Activated CD8-positive, alpha-beta T cell treated with anti-CD3 and anti-CD28 coated beads for 36 hours (primary cell): ENCODE measurements at regions of chr19 and their contacts with region 1.

Region 1: GRCh38 chr19:18322759-18323460 is at the start of gene LSM4:
- DNase-seq: peak; percentile 100
- ATAC-seq: peak; percentile 94
- H3K4me3 Mint-ChIP-seq: peak within 1 kb of the TSS; percentile 85
- H3K27ac Mint-ChIP-seq: peak within 1 kb of the TSS; percentile 99
- H3K4me1 Mint-ChIP-seq: peaks cover 50% of the 10 kb centered on the region
- H3K27me3 Mint-ChIP-seq: no peaks in the 10 kb centered on the region
- CTCF ChIP-seq: peak; percentile 45
- total RNA-seq, gene LSM4: 426 to 433 TPM

Region 2: GRCh38 chr19:18274781-18275356 is 48.0 kb before region 1 on chr19:
- CTCF ChIA-PET with region 1: interaction called, 330 read pairs
- POLR2A ChIA-PET with region 1: interaction called, 592 read pairs
- intact Hi-C with region 1: loop called (anchors 1 kb)
- DNase-seq: peak; percentile 32
- ATAC-seq: peak; percentile 6
- H3K4me3 Mint-ChIP-seq: no peak overlapping the region
- H3K27ac Mint-ChIP-seq: peak overlapping the region; percentile 63
- H3K4me1 Mint-ChIP-seq: peaks cover 31% of the 10 kb centered on the region
- H3K27me3 Mint-ChIP-seq: no peaks in the 10 kb centered on the region
- CTCF ChIP-seq: no peak

Region 3: GRCh38 chr19:18291590-18292461 is 31.1 kb before region 1 on chr19:
- CTCF ChIA-PET with region 1: interaction called, 9 read pairs
- POLR2A ChIA-PET with region 1: interaction called, 20 read pairs
- intact Hi-C with region 1: no loop called
- DNase-seq: peak; percentile 98
- ATAC-seq: peak; percentile 57
- H3K4me3 Mint-ChIP-seq: peak overlapping the region; percentile 85
- H3K27ac Mint-ChIP-seq: peak overlapping the region; percentile 93
- H3K4me1 Mint-ChIP-seq: peaks cover 64% of the 10 kb centered on the region
- H3K27me3 Mint-ChIP-seq: no peaks in the 10 kb centered on the region
- CTCF ChIP-seq: no peak

Region 4: DNA sequence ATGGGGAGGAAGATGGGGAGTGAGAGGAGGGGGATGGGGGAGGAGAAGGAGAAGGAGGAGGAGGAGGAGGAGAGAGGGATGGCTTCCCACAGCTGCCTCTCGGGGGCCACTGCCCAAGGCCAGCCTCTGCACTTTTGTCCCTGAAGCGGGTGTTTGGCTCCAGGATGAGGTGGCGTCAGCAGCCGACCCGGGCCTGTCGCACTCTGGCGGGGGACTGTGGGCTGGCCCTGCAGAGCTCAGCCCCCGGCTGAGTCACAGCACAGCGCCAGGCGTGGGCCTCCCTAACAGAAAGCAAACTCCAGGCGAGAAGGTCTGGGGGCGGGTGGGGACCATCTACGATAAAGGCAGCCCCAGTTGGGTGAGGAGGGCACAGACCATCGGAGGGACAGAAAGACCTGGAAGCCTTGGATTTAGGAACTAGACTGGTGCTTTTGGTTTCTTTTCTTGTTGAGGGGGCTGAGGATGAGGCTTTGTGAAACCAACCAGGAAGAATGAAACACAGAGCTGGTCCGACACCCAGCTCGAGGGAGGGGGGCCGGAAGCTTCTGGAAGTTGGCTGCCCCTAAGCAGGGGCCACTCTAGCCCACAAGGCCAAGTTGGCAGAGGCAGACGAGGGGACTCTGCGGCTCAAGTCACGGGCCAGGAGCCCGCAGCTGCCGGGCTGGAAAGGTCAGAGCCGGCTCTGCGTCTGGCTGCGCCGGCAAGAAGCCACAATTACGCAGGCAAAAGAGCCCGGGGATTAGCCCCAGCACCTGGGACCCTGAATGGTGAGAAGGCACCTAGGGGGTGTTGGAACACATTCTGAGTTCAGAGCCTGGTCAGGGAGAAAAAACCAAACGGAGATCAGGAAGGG is 18.2 kb before region 1 on chr19:
- CTCF ChIA-PET with region 1: interaction called, 13 read pairs
- POLR2A ChIA-PET with region 1: interaction called, 124 read pairs
- intact Hi-C with region 1: no loop called
- DNase-seq: peak; percentile 96
- ATAC-seq: peak; percentile 77
- H3K4me3 Mint-ChIP-seq: peak overlapping the region; percentile 92
- H3K27ac Mint-ChIP-seq: peak overlapping the region; percentile 96
- H3K4me1 Mint-ChIP-seq: peaks cover 40% of the 10 kb centered on the region
- H3K27me3 Mint-ChIP-seq: no peaks in the 10 kb centered on the region
- CTCF ChIP-seq: no peak

Region 5: GRCh38 chr19:18310118-18310909 is 12.6 kb before region 1 on chr19:
- CTCF ChIA-PET with region 1: interaction called, 13 read pairs
- POLR2A ChIA-PET with region 1: interaction called, 124 read pairs
- intact Hi-C with region 1: no loop called
- DNase-seq: no peak
- ATAC-seq: no peak
- H3K4me3 Mint-ChIP-seq: no peak overlapping the region
- H3K27ac Mint-ChIP-seq: peak overlapping the region; percentile 42
- H3K4me1 Mint-ChIP-seq: peaks cover 39% of the 10 kb centered on the region
- H3K27me3 Mint-ChIP-seq: no peaks in the 10 kb centered on the region
- CTCF ChIP-seq: no peak